Mammary epithelial cell (primary cell): ENCODE measurements at regions of chr13 and their contacts with region 1.

Region 1: DNA sequence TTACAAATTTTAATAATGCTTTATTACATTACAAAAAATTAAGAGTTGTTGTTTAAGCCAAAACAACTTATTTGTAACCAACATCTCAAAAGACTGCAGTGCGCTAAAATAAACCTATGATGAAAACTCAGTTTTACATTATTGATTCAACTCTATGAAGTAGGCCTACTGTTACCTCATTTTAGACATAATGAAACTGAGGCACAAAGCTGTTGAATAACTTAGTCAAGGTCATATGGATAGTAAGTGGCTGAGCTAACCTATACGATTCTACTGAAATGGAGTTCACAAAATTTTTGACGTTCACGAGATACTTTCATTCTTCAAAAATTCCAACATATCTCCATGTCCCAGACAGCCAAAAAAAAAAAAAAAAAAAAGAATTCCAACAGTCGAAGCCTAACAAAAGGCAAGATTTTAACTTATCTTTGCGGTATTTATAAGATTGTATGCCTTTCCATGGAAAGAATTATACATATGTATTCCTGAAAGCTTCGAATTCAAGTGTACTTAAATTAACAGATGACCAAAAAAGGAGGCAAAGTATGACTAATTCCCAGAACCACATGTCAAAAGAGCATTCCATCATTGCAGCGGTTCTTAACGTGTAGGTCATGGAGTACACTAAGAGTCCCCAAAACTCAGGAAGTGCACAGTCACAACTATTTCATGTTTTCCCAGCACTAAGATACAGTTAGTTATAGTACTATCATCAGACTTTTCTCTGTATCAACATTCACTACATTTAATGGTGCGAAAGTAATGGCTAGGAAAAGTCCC is 69.4 kb downstream of the PSPC1 start:
- DNase-seq: peak; percentile 32
- H3K4me3 ChIP-seq: no peak overlapping the region
- H3K27ac ChIP-seq: no peak overlapping the region
- H3K4me1 ChIP-seq: no peaks in the 10 kb centered on the region
- H3K27me3 ChIP-seq: no peaks in the 10 kb centered on the region
- CTCF ChIP-seq: no peak

Region 2: GRCh38 chr13:19782049-19782726 is 68.8 kb after region 1 on chr13:
- CTCF ChIA-PET with region 1: no interaction called
- dilution Hi-C with region 1: loop called (anchors 5 kb)
- in situ Hi-C with region 1: no loop called
- intact Hi-C with region 1: no loop called
- DNase-seq: peak; percentile 44
- H3K4me3 ChIP-seq: peak overlapping the region; percentile 80 to 98 (median 90)
- H3K27ac ChIP-seq: peak overlapping the region; percentile 92
- H3K4me1 ChIP-seq: peaks cover 3% of the 10 kb centered on the region
- H3K27me3 ChIP-seq: no peaks in the 10 kb centered on the region
- CTCF ChIP-seq: peak in 1 of 2 donors; percentile 6

Region 3: GRCh38 chr13:20559659-20560356 is 846.4 kb after region 1 on chr13:
- CTCF ChIA-PET with region 1: no interaction called
- dilution Hi-C with region 1: no loop called
- in situ Hi-C with region 1: no loop called
- intact Hi-C with region 1: no loop called
- DNase-seq: peak; percentile 1
- H3K4me3 ChIP-seq: no peak overlapping the region
- H3K27ac ChIP-seq: no peak overlapping the region
- H3K4me1 ChIP-seq: no peaks in the 10 kb centered on the region
- H3K27me3 ChIP-seq: no peaks in the 10 kb centered on the region
- CTCF ChIP-seq: no peak